ENCODE measurements at regions of chr3 and their contacts with region 1.

Region 1: DNA sequence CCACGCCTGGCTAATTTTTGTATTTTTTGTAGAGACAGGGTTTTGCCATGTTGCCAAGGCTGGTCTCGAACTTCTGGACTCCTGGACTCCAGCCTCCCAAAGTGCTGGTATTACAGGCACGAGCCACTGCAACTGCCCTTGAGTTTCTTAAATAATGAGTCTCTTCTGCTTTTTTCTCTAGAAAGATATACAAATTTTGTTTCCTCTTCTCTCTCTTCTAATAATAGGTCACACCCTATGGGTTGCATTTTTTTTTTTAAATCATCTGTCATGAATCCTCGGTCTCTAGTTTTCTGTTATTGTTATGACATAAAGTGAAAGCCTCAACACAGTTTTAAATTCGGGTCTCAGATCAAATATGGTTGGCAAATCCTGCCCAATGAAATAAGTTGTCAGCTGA is 111.2 kb downstream of the IL12A start:
- DNase-seq: no peak

Region 2: GRCh38 chr3:160049565-160049964 is 50.3 kb before region 1 on chr3:
- intact Hi-C with region 1: loop called (anchors 5 kb)
- DNase-seq: no peak